A673 (cell line): ENCODE measurements at regions of chr5 and their contacts with region 1.

Region 1: DNA sequence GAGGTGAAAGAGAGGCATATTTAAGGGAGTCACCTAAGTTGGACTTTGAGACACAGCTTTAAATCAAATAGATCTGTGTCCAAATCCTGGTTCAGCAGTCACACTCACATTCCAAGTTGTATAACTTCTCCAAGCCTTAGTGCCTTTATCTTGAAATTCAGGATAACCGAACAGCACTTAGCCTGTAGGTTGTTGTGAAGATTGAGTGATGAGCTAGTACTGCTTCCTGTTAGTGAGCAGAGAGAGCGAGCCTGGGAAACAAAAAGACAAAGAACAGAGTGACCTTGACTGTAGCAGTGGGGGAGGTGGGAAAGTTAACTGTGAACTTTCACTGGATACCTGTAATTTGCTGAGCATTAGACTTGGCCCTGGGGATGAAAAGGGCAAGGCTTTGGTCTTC is 22.4 kb downstream of the MAML1 start:
- DNase-seq: no peak
- H3K4me3 ChIP-seq: no peak overlapping the region
- H3K27ac ChIP-seq: no peak overlapping the region
- H3K4me1 ChIP-seq: no peaks in the 10 kb centered on the region
- H3K27me3 ChIP-seq: no peaks in the 10 kb centered on the region
- CTCF ChIP-seq: no peak

Region 2: DNA sequence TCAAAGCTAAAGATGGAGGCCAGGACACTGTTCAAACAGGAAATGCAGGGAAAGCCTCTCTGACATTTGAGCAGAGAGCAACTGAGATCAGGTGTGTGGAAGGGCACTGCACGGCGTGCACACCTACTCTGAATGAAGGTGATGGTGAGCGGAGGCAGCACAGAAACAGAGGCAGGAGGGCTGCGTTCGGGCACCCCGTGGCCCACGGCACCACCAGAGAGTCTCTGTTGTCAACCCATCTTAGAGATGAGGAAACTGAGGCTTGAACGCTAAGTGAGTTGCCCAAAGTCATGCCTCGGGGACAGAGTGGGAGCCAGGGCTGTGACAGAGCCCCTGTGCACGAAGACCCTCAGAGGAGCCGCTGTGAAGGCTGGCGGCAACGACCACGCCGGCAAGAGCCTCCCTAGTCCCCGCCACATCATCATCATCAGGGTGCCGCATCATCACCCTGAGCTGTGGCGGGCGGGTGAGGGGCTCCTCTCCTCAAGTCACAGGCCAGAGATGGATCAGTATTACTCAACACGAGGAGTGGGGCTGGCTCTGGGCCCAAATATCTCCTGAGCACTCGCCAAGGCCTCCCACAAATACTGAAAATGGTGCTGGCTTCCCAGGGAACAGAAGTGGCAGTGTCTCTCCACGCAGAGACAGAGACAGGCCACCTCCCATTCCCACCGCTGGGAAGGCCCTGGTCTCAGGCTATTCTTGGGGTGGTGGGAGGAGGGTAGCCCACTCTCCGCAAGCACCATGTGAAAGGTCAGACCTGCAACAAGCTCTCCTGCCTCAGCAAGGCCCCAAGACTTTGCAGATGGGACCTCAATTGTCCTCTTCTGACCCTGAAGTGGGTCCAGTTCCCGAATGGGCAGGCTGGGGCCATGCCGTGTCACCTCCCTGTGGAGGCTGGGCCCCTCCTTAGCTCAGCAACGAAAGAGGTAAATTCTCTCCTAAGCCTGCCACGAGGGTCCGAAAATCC is 985.4 kb before region 1 on chr5:
- CTCF ChIA-PET with region 1: no interaction called
- POLR2A ChIA-PET with region 1: interaction called, 14 read pairs
- intact Hi-C with region 1: no loop called
- DNase-seq: no peak
- H3K4me3 ChIP-seq: no peak overlapping the region
- H3K27ac ChIP-seq: no peak overlapping the region
- H3K4me1 ChIP-seq: no peaks in the 10 kb centered on the region
- H3K27me3 ChIP-seq: no peaks in the 10 kb centered on the region
- CTCF ChIP-seq: no peak

Region 3: GRCh38 chr5:179777909-179778308 is 22.9 kb after region 1 on chr5:
- CTCF ChIA-PET with region 1: no interaction called
- POLR2A ChIA-PET with region 1: no interaction called
- intact Hi-C with region 1: no loop called
- DNase-seq: no peak
- H3K4me3 ChIP-seq: no peak overlapping the region
- H3K27ac ChIP-seq: no peak overlapping the region
- H3K4me1 ChIP-seq: no peaks in the 10 kb centered on the region
- H3K27me3 ChIP-seq: no peaks in the 10 kb centered on the region
- CTCF ChIP-seq: no peak